Natural killer cell (primary cell): ENCODE measurements at regions of chr9 and their contacts with region 1.

Region 1: GRCh38 chr9:27529316-27530278 is at the start of gene MOB3B:
- DNase-seq: peak; percentile 77 to 83
- ATAC-seq: peak; percentile 88 to 93 (median 91)
- H3K4me3 ChIP-seq: peak within 1 kb of the TSS; percentile 62
- H3K4me3 Mint-ChIP-seq: peak within 1 kb of the TSS; percentile 85
- H3K27ac ChIP-seq: peak within 1 kb of the TSS; percentile 74
- H3K27ac Mint-ChIP-seq: peak within 1 kb of the TSS in 1 of 2 donors; percentile 65
- H3K4me1 ChIP-seq: peaks cover 20% of the 10 kb centered on the region
- H3K4me1 Mint-ChIP-seq: peaks cover 0 to 12% of the 10 kb centered on the region in 2 donors
- H3K27me3 ChIP-seq: peaks cover 8% of the 10 kb centered on the region
- H3K27me3 Mint-ChIP-seq: peaks cover 16 to 18% of the 10 kb centered on the region in 2 donors
- CTCF ChIP-seq: peak; percentile 93
- total RNA-seq, gene MOB3B: 0.23 to 0.30 (median 0.28) TPM

Region 2: GRCh38 chr9:27033823-27034403 is 495.7 kb before region 1 on chr9:
- intact Hi-C with region 1: loop called (anchors 10 kb)
- DNase-seq: peak in 1 of 2 donors; percentile 56
- ATAC-seq: peak in 2 of 3 donors; percentile 61 to 66
- H3K4me3 ChIP-seq: no peak overlapping the region
- H3K4me3 Mint-ChIP-seq: no peak overlapping the region
- H3K27ac ChIP-seq: no peak overlapping the region
- H3K27ac Mint-ChIP-seq: no peak overlapping the region
- H3K4me1 ChIP-seq: no peaks in the 10 kb centered on the region
- H3K4me1 Mint-ChIP-seq: no peaks in the 10 kb centered on the region
- H3K27me3 ChIP-seq: no peaks in the 10 kb centered on the region
- H3K27me3 Mint-ChIP-seq: no peaks in the 10 kb centered on the region
- CTCF ChIP-seq: peak; percentile 76

Region 3: GRCh38 chr9:27333241-27334052 is 196.2 kb before region 1 on chr9:
- intact Hi-C with region 1: loop called (anchors 1 kb)
- DNase-seq: peak; percentile 40 to 74
- ATAC-seq: peak; percentile 57 to 71 (median 70)
- H3K4me3 ChIP-seq: no peak overlapping the region
- H3K4me3 Mint-ChIP-seq: no peak overlapping the region
- H3K27ac ChIP-seq: no peak overlapping the region
- H3K27ac Mint-ChIP-seq: no peak overlapping the region
- H3K4me1 ChIP-seq: no peaks in the 10 kb centered on the region
- H3K4me1 Mint-ChIP-seq: no peaks in the 10 kb centered on the region
- H3K27me3 ChIP-seq: no peaks in the 10 kb centered on the region
- H3K27me3 Mint-ChIP-seq: peaks cover 0 to 2% of the 10 kb centered on the region in 2 donors
- CTCF ChIP-seq: peak; percentile 87

Region 4: DNA sequence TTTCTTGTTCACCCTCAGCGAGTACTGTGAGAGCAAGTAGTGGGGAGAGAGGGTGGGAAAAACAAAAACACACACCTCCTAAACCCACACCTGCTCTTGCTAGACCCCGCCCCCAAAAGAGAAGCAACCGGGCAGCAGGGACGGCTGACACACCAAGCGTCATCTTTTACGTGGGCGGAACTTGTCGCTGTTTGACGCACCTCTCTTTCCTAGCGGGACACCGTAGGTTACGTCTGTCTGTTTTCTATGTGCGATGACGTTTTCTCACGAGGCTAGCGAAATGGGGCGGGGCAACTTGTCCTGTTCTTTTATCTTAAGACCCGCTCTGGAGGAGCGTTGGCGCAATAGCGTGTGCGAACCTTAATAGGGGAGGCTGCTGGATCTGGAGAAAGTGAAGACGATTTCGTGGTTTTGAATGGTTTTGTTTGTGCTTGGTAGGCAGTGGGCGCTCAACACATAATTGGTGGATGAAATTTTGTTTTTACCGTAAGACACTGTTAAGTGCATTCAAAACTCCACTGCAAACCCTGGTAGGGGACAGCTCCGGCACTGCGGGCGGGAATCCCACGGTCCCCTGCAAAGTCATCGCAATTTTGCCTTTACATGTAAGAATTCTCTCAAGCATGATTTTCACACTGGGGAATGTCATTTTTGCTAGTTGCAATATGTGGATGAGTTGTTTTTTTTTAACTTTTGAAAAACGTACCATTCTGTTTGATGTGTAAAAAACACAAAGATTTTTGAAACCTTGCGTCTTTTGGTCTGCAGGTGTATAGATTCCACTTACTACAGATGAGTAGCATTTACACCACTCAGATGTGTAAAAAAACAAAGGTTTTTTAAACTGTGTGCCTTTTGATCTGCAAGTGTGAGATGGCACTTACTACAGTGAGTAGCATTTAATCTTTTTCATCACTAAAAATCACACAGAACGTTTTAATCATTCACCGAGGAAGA is 44.3 kb after region 1 on chr9:
- intact Hi-C with region 1: loop called (anchors 1 kb)
- DNase-seq: peak; percentile 90 to 100
- ATAC-seq: peak; percentile 83 to 90 (median 83)
- H3K4me3 ChIP-seq: peak overlapping the region; percentile 90
- H3K4me3 Mint-ChIP-seq: peak overlapping the region; percentile 100
- H3K27ac ChIP-seq: peak overlapping the region; percentile 99
- H3K27ac Mint-ChIP-seq: peak overlapping the region; percentile 97 to 99
- H3K4me1 ChIP-seq: peaks cover 7% of the 10 kb centered on the region
- H3K4me1 Mint-ChIP-seq: peaks cover 25 to 26% of the 10 kb centered on the region in 2 donors
- H3K27me3 ChIP-seq: no peaks in the 10 kb centered on the region
- H3K27me3 Mint-ChIP-seq: peaks cover 6 to 8% of the 10 kb centered on the region in 2 donors
- CTCF ChIP-seq: no peak